AG04449 (cell line): ENCODE measurements at regions of chr7 and their contacts with region 1.

Region 1: DNA sequence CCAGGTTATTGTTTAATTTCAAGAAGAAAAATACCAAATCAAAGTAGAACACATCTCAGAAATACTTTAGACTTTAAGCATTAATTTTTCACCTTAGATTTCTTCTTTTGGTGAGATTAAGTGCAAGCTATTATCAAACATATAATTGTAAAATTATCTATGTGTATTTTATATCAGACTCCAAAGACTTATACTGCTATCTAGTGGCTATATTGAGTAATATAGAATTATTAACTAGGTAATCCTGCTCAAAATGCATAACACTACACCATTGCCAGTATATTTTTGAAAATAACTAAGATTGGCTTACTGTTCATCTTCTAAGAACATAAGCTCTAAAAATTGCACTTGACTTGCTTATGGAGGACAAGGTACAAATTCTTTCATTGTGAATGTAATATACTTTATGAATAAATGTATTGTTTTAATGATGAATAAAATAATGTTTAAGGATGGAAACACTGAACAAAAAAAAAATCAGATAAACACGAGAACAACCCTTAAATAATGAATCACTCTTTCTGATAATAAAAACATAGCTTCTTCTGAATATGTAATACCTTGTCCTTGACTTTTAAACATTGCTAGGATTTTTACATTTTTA is 86.7 kb upstream of the GNAI1 start:
- DNase-seq: no peak
- H3K4me3 ChIP-seq: no peak overlapping the region
- CTCF ChIP-seq: no peak

Region 2: DNA sequence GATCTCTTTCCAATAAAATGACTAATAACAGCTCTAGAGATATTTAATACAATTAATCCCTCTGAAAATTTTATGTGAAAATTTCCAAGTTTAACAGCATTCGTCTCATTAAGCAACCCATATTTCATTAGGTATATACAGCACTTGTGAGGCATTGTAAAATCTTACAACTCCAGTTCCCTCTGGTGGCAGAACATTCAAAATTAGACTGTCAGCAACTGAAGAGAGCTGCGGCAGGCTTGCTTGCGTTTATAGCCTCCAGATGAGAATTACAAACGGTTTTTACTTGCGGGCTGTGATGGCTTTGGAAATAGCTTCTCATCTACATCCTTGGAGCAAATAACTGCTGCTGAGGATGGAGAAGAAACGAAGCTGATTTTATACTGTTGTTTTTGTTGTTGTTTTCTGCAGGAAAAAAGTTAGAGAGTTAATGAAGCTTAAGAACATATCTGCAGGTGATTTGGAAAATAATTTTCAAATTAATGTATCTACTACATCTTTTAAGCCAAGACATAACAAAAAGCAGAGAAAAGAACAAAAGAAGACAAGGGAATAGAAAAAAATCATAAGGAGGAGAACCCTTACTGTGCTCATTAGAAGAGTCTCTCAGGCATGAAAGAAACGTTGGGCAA is 765.8 kb before region 1 on chr7:
- CTCF ChIA-PET with region 1: interaction called, 13 read pairs
- POLR2A ChIA-PET with region 1: no interaction called
- DNase-seq: peak; percentile 29
- H3K4me3 ChIP-seq: peak overlapping the region; percentile 19
- CTCF ChIP-seq: peak; percentile 56

Region 3: DNA sequence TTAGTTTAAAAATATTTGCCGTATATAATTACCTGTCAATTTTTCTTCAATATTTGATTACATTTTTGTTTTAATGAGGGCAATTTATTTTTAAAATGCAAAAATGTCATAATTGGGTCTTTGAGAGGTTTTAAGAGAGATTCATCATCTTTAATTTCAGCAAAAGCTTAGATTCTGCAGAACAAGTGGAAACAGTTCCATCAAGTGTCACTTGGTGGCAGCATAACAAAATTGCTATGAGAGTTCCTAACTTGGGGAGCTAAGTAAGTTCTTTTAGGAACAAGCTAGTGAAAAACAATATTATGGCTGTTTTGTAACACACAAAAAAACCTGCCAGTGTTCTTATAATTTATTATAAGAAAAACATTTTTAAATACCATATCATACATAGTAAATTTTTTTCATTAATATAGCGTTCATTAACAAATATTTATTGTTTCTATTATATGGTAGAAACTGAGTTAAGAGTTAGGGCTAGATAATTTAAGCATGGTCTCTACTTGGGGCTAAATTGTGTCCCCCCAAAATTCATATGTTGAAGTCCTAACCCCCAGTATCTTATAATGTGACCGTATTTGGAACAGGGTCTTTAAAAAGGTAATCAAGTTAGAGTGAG is 749.7 kb before region 1 on chr7:
- CTCF ChIA-PET with region 1: interaction called, 48 read pairs
- POLR2A ChIA-PET with region 1: no interaction called
- DNase-seq: no peak
- H3K4me3 ChIP-seq: no peak overlapping the region
- CTCF ChIP-seq: peak; percentile 59

Region 4: DNA sequence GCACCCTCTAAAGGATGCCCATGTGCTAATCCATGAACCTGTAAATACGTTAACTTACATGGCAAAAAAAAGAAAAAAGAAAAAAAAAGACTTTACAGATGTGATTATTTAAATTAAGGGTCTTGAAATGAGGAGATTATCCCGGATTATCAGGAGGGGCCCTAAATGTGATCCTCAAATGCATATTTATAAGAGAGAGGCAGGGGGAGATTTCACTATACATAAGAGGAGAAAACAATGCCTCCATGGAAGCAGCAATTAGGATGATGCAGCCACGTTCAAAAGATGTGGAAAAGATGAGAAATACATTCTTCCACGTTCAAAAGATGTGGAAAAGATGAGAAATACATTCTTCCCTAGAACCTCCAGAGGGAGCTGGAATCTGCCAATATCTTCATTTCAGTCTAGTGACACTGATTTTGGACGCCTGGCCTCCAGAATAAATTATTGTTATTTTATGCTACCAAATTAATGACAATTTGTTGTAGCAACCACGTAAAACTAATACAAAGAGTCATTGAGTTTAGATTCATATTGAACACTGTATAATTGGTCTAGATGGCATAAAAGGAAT is 241.7 kb before region 1 on chr7:
- CTCF ChIA-PET with region 1: interaction called, 35 read pairs
- POLR2A ChIA-PET with region 1: no interaction called
- DNase-seq: no peak
- H3K4me3 ChIP-seq: no peak overlapping the region
- CTCF ChIP-seq: peak; percentile 36

Region 5: GRCh38 chr7:80018941-80019752 is 28.8 kb before region 1 on chr7:
- CTCF ChIA-PET with region 1: interaction called, 17 read pairs
- POLR2A ChIA-PET with region 1: no interaction called
- DNase-seq: no peak
- H3K4me3 ChIP-seq: no peak overlapping the region
- CTCF ChIP-seq: peak; percentile 77

Region 6: DNA sequence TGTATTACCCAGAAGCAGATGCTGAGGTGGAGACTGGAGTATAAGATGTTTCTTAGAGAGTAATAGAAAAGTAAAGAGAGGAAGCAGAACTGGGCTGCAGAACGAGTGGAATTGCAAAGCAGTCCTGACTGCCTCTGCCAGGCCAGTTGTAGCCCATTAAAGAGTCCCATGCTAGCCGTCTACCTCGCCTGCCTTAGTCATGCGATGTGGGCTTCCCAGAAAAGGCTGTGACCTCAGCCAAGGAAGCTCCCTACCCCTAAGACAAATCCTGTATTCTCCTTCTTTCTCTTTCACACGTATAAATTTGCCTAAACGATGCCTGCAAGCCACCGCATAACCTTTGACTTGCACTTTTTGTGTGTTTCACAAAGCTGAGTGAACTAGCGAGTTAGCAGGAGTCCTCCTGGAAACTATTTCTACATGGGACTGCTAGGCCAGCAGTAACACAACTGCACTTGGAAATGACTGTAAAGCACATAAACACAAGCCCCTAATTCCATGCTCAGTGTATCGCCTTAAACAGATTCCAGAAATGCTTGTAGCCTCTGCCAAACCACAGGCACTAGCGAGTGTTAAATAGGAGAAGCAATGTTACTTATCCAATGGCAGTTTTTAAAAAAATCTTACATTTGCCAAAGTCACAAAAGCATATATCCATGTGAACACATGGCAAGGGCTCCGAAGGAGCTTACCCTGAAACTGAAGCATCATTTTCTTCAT is 39.3 kb after region 1 on chr7:
- CTCF ChIA-PET with region 1: no interaction called
- POLR2A ChIA-PET with region 1: no interaction called
- DNase-seq: peak; percentile 63
- H3K4me3 ChIP-seq: no peak overlapping the region
- CTCF ChIP-seq: no peak